ENCODE measurements at regions of chr2 and their contacts with region 1.

Region 1: GRCh38 chr2:134245340-134245984 is 8.4 kb upstream of the MGAT5 start:
- DNase-seq: peak; percentile 66 to 79 (median 69)
- H3K4me3 ChIP-seq: no peak overlapping the region
- H3K4me3 Mint-ChIP-seq: peak overlapping the region in 7 of 8 donors; percentile 37 to 73 (median 65)
- H3K27ac ChIP-seq: no peak overlapping the region
- H3K27ac Mint-ChIP-seq: peak overlapping the region; percentile 13 to 88 (median 81)
- H3K4me1 ChIP-seq: peaks cover 99% of the 10 kb centered on the region
- H3K4me1 Mint-ChIP-seq: peaks cover 70 to 97% (median 87%) of the 10 kb centered on the region in 4 donors
- H3K27me3 ChIP-seq: no peaks in the 10 kb centered on the region
- H3K27me3 Mint-ChIP-seq: no peaks in the 10 kb centered on the region

Region 2: DNA sequence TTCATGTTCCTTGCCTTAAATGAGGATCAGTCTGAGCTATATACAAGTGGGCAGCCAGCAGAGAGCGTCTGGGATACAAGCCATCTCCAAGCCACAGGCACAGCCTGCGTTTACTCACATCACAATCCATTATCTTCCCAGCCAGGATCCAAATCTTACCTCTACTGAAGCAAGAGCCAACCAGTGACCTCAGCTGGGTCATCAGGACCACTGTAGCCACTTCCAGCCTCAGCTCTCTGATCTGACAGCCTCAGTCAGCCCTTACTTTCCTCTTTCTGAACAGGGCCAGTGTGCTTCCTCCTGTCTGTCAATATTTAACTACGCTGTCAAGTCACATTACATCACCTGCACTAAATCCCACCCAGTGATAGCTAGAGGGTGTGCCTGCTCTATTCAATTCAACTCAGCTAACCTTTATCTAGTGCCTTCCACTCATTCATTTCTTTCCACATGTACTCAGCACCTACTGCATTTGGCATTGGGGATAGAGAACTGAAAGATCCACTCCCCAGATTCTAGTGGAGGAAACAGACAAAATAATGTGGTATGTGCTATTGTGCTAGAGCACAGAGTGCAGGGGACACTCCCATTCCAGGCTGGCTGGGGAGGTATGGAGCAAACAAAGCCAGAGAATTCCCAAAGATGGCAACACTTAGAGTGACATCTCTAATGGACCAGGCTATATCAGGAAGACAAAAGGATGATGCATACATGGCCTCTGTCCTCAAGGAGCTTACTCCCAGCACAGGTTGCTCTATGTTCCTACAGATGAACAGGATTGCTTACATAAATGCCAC is 823.7 kb before region 1 on chr2:
- CTCF ChIA-PET with region 1: no interaction called
- POLR2A ChIA-PET with region 1: no interaction called
- intact Hi-C with region 1: no loop called
- DNase-seq: no peak
- H3K4me3 ChIP-seq: no peak overlapping the region
- H3K4me3 Mint-ChIP-seq: no peak overlapping the region
- H3K27ac ChIP-seq: no peak overlapping the region
- H3K27ac Mint-ChIP-seq: no peak overlapping the region
- H3K4me1 ChIP-seq: no peaks in the 10 kb centered on the region
- H3K4me1 Mint-ChIP-seq: no peaks in the 10 kb centered on the region
- H3K27me3 ChIP-seq: no peaks in the 10 kb centered on the region
- H3K27me3 Mint-ChIP-seq: no peaks in the 10 kb centered on the region

Region 3: DNA sequence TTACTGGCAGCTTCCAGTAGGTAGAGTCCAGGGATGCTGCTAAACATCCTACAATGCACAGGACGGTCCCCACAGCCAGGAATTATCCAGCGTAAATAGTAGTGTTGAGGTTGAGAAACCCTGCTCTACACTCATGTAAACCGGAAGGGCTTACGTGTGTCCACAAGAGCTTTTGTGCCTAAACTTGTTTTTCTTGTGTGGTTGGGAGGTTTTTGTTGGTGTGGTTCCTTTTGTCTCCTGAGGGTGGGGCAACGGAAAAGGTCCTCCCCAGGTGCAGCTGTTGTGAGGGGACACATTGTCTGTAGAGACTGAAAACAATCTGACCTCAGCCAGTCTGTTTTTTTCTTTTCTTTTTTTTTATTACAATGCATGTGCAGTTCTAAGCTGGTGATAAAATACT is 64.3 kb before region 1 on chr2:
- CTCF ChIA-PET with region 1: interaction called, 11 read pairs
- POLR2A ChIA-PET with region 1: interaction called, 3 read pairs
- intact Hi-C with region 1: loop called (anchors 5 kb)
- DNase-seq: peak; percentile 78 to 87 (median 80)
- H3K4me3 ChIP-seq: peak overlapping the region in 1 of 2 donors; percentile 20
- H3K4me3 Mint-ChIP-seq: peak overlapping the region; percentile 46 to 81 (median 68)
- H3K27ac ChIP-seq: peak overlapping the region; percentile 25
- H3K27ac Mint-ChIP-seq: peak overlapping the region; percentile 89 to 97 (median 93)
- H3K4me1 ChIP-seq: peaks cover 97% of the 10 kb centered on the region
- H3K4me1 Mint-ChIP-seq: peaks cover 83 to 98% (median 90%) of the 10 kb centered on the region in 4 donors
- H3K27me3 ChIP-seq: no peaks in the 10 kb centered on the region
- H3K27me3 Mint-ChIP-seq: no peaks in the 10 kb centered on the region

Region 4: DNA sequence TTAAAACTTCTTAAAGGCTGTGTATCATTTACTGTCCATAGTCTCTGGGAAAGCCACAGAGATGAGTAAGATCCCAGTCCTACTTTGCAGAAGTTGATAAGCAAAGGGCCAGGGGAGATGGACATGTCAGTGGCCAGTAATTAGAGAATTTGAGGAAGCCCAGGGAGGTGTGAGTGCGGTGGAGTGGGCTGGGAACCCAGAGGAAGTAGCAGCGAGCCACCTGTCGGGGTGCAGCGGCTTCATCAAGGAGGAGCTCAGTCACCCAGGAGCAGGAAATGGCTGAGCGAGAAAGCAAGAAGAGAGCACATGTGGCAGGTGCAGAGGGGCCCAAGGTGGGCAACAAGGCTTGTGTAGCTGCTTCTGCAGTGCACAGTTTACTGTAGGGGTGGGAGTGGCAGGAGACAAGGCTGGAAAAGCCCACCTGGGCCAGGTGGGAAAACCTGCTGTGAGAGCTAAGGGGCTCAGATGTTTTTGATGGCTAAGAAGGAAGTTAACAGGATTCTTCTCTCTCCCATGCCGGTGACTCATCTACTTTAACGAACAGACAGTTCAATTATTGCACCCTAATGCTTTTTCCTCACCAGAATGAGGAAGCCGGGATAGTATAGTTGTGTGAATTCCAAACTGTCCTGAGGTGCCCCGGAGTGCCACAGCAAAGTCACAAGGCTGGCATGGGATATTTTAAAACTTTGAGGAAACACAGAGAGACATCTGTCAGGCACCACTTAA is 26.4 kb before region 1 on chr2:
- CTCF ChIA-PET with region 1: interaction called, 62 read pairs
- POLR2A ChIA-PET with region 1: interaction called, 19 read pairs
- intact Hi-C with region 1: no loop called
- DNase-seq: peak in 4 of 5 donors; percentile 40 to 56 (median 48)
- H3K4me3 ChIP-seq: peak overlapping the region; percentile 12 to 13
- H3K4me3 Mint-ChIP-seq: peak overlapping the region; percentile 80 to 90 (median 84)
- H3K27ac ChIP-seq: peak overlapping the region; percentile 41
- H3K27ac Mint-ChIP-seq: peak overlapping the region; percentile 85 to 97 (median 90)
- H3K4me1 ChIP-seq: peaks cover 60% of the 10 kb centered on the region
- H3K4me1 Mint-ChIP-seq: peaks cover 65 to 78% (median 71%) of the 10 kb centered on the region in 4 donors
- H3K27me3 ChIP-seq: no peaks in the 10 kb centered on the region
- H3K27me3 Mint-ChIP-seq: no peaks in the 10 kb centered on the region

Region 5: DNA sequence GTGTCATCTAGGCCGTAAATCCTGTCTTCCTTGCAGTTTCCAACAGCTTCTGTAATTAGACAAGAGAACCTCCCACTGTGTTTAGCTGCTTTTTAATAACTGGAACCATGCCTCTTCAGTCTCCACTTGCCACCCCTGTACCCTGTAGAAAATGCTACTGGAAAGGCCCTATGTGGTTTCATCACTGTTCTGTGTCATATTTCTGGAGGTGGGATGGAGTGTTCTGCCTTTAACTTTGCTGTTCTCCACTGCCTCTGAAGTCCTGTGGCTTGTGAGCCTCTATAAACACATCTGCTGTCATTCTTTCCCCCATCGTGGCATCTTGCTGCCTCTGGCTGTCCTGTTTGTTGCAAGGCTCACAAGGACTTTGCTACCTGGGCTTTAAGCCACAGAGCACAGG is 26.3 kb after region 1 on chr2:
- CTCF ChIA-PET with region 1: interaction called, 13 read pairs
- POLR2A ChIA-PET with region 1: no interaction called
- intact Hi-C with region 1: no loop called
- DNase-seq: no peak
- H3K4me3 ChIP-seq: no peak overlapping the region
- H3K4me3 Mint-ChIP-seq: no peak overlapping the region
- H3K27ac ChIP-seq: no peak overlapping the region
- H3K27ac Mint-ChIP-seq: peak overlapping the region in 3 of 7 donors; percentile 50 to 74 (median 58)
- H3K4me1 ChIP-seq: peaks cover 36% of the 10 kb centered on the region
- H3K4me1 Mint-ChIP-seq: peaks cover 46 to 79% (median 68%) of the 10 kb centered on the region in 4 donors
- H3K27me3 ChIP-seq: no peaks in the 10 kb centered on the region
- H3K27me3 Mint-ChIP-seq: no peaks in the 10 kb centered on the region

Region 6: GRCh38 chr2:134324947-134325346 is 79.5 kb after region 1 on chr2:
- CTCF ChIA-PET with region 1: interaction called, 27 read pairs
- POLR2A ChIA-PET with region 1: interaction called, 4 read pairs
- intact Hi-C with region 1: no loop called
- DNase-seq: peak in 4 of 5 donors; percentile 38 to 56 (median 46)
- H3K4me3 ChIP-seq: no peak overlapping the region
- H3K4me3 Mint-ChIP-seq: peak overlapping the region in 4 of 8 donors; percentile 9 to 33 (median 29)
- H3K27ac ChIP-seq: no peak overlapping the region
- H3K27ac Mint-ChIP-seq: peak overlapping the region in 4 of 7 donors; percentile 33 to 87 (median 69)
- H3K4me1 ChIP-seq: peaks cover 71% of the 10 kb centered on the region
- H3K4me1 Mint-ChIP-seq: peaks cover 44 to 82% (median 68%) of the 10 kb centered on the region in 4 donors
- H3K27me3 ChIP-seq: no peaks in the 10 kb centered on the region
- H3K27me3 Mint-ChIP-seq: no peaks in the 10 kb centered on the region

Region 7: GRCh38 chr2:134527381-134527780 is 281.9 kb after region 1 on chr2:
- CTCF ChIA-PET with region 1: no interaction called
- POLR2A ChIA-PET with region 1: no interaction called
- intact Hi-C with region 1: no loop called
- DNase-seq: no peak
- H3K4me3 ChIP-seq: no peak overlapping the region
- H3K4me3 Mint-ChIP-seq: no peak overlapping the region
- H3K27ac ChIP-seq: no peak overlapping the region
- H3K27ac Mint-ChIP-seq: no peak overlapping the region
- H3K4me1 ChIP-seq: no peaks in the 10 kb centered on the region
- H3K4me1 Mint-ChIP-seq: no peaks in the 10 kb centered on the region
- H3K27me3 ChIP-seq: no peaks in the 10 kb centered on the region
- H3K27me3 Mint-ChIP-seq: peaks cover 1 to 3% of the 10 kb centered on the region in 2 donors